ENCODE measurements at regions of chr6 and their contacts with region 1.

Region 1: GRCh38 chr6:125956506-125957390 is at the start of gene HINT3:
- DNase-seq: peak; percentile 83
- ATAC-seq: peak; percentile 85
- H3K4me3 ChIP-seq: peak within 1 kb of the TSS; percentile 82
- H3K27ac ChIP-seq: peak within 1 kb of the TSS; percentile 88
- H3K4me1 ChIP-seq: peaks cover 7% of the 10 kb centered on the region
- H3K27me3 ChIP-seq: no peaks in the 10 kb centered on the region
- CTCF ChIP-seq: peak; percentile 97 to 99 (median 98)
- EP300 ChIP-seq: 0 out of 4 replicates have a peak, but pooled peaks of 1 of the 2 experiments have one; percentile 27
- POLR2A ChIP-seq: peak; percentile 82
- RAD21 ChIP-seq: peak; percentile 76
- polyA plus RNA-seq, gene HINT3: 0.72 to 1.4 TPM

Region 2: GRCh38 chr6:125314019-125314581 is 642.6 kb before region 1 on chr6:
- CTCF ChIA-PET with region 1: interaction called, 10 read pairs
- POLR2A ChIA-PET with region 1: no interaction called
- RAD21 ChIA-PET with region 1: interaction called, 3 read pairs
- SMC1A ChIA-PET with region 1: interaction called, 4 read pairs
- in situ Hi-C with region 1: no loop called
- intact Hi-C with region 1: loop called (anchors 5 kb)
- DNase-seq: no peak
- ATAC-seq: peak; percentile 97
- H3K4me3 ChIP-seq: no peak overlapping the region
- H3K27ac ChIP-seq: no peak overlapping the region
- H3K4me1 ChIP-seq: no peaks in the 10 kb centered on the region
- H3K27me3 ChIP-seq: no peaks in the 10 kb centered on the region
- CTCF ChIP-seq: peak; percentile 76 to 95 (median 88)
- EP300 ChIP-seq: no peak
- POLR2A ChIP-seq: no peak
- RAD21 ChIP-seq: peak; percentile 96

Region 3: GRCh38 chr6:125732398-125732797 is 224.3 kb before region 1 on chr6:
- CTCF ChIA-PET with region 1: no interaction called
- POLR2A ChIA-PET with region 1: no interaction called
- RAD21 ChIA-PET with region 1: no interaction called
- SMC1A ChIA-PET with region 1: no interaction called
- in situ Hi-C with region 1: no loop called
- intact Hi-C with region 1: no loop called
- DNase-seq: no peak
- ATAC-seq: peak; percentile 64
- H3K4me3 ChIP-seq: no peak overlapping the region
- H3K27ac ChIP-seq: no peak overlapping the region
- H3K4me1 ChIP-seq: no peaks in the 10 kb centered on the region
- H3K27me3 ChIP-seq: peaks cover 3 to 4% of the 10 kb centered on the region in 2 experiments; a peak in 3 of 4 replicates
- CTCF ChIP-seq: no peak
- EP300 ChIP-seq: no peak
- POLR2A ChIP-seq: no peak
- RAD21 ChIP-seq: no peak

Region 4: GRCh38 chr6:125834348-125834747 is 122.4 kb before region 1 on chr6:
- CTCF ChIA-PET with region 1: interaction called, 13 read pairs
- POLR2A ChIA-PET with region 1: interaction called, 4 read pairs
- RAD21 ChIA-PET with region 1: interaction called, 6 read pairs
- SMC1A ChIA-PET with region 1: interaction called, 4 read pairs
- in situ Hi-C with region 1: no loop called
- intact Hi-C with region 1: no loop called
- DNase-seq: peak; percentile 36
- ATAC-seq: peak; percentile 82
- H3K4me3 ChIP-seq: no peak overlapping the region
- H3K27ac ChIP-seq: no peak overlapping the region
- H3K4me1 ChIP-seq: peaks cover 18% of the 10 kb centered on the region
- H3K27me3 ChIP-seq: no peaks in the 10 kb centered on the region
- CTCF ChIP-seq: no peak
- EP300 ChIP-seq: 0 out of 4 replicates have a peak, but pooled peaks of 1 of the 2 experiments have one; percentile 18
- POLR2A ChIP-seq: no peak
- RAD21 ChIP-seq: no peak

Region 5: DNA sequence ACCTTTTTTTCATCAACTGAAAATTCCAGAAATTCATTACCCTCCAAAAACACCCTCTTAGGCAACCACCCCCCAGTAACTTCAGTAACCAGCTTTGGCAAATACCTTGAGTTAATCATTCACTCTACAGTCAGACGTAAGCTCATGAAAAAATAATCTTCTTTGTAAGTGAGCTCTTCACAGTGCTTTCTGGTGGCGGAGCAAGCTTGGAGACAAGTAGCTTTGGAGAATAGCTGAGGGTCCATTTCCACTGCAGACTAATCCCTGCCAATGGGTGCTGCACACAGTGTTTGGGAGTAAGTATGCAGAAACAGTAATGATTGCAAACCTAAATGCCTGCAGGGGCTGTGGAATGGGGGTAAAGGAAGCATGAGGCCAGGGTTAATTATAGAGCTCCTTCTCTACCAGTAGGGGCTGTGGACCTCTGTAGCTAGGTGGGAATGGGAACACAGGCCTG is 57.0 kb before region 1 on chr6:
- CTCF ChIA-PET with region 1: interaction called, 46 read pairs
- POLR2A ChIA-PET with region 1: interaction called, 4 read pairs
- RAD21 ChIA-PET with region 1: interaction called, 12 read pairs
- SMC1A ChIA-PET with region 1: interaction called, 7 read pairs
- in situ Hi-C with region 1: no loop called
- intact Hi-C with region 1: no loop called
- DNase-seq: no peak
- ATAC-seq: peak; percentile 39; the same call in 2 of the 3 replicates
- H3K4me3 ChIP-seq: no peak overlapping the region
- H3K27ac ChIP-seq: no peak overlapping the region
- H3K4me1 ChIP-seq: no peaks in the 10 kb centered on the region
- H3K27me3 ChIP-seq: no peaks in the 10 kb centered on the region
- CTCF ChIP-seq: no peak
- EP300 ChIP-seq: no peak
- POLR2A ChIP-seq: no peak
- RAD21 ChIP-seq: no peak

Region 6: GRCh38 chr6:125918681-125919566 is 37.8 kb before region 1 on chr6:
- CTCF ChIA-PET with region 1: interaction called, 39 read pairs
- POLR2A ChIA-PET with region 1: interaction called, 11 read pairs
- RAD21 ChIA-PET with region 1: interaction called, 13 read pairs
- SMC1A ChIA-PET with region 1: interaction called, 35 read pairs
- in situ Hi-C with region 1: no loop called
- intact Hi-C with region 1: no loop called
- DNase-seq: peak; percentile 93
- ATAC-seq: peak; percentile 94
- H3K4me3 ChIP-seq: peak overlapping the region; percentile 62
- H3K27ac ChIP-seq: peak overlapping the region; percentile 96
- H3K4me1 ChIP-seq: peaks cover 8% of the 10 kb centered on the region
- H3K27me3 ChIP-seq: no peaks in the 10 kb centered on the region
- CTCF ChIP-seq: no peak
- EP300 ChIP-seq: 0 out of 4 replicates have a peak, but pooled peaks have one; percentile 11 to 25
- POLR2A ChIP-seq: peak; percentile 72
- RAD21 ChIP-seq: no peak

Region 7: DNA sequence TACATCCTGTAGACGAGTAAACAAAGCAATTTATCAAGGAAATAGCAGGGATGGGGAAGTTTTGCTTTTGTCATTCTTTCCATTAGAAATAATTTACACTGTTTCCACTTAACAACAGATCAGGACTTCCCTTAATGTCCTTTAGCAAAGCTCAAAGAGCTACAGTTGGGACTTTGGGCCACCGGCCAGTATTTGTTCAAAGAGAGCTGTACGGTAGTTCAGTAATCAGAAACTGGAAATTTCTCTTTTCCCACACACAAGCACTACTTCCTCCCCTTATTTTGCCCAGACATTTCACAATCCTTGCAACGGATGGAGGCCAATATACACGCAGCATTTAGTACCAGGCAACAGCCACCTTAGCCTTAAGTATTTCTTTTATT is 12.3 kb before region 1 on chr6:
- CTCF ChIA-PET with region 1: interaction called, 10 read pairs
- POLR2A ChIA-PET with region 1: no interaction called
- RAD21 ChIA-PET with region 1: interaction called, 7 read pairs
- SMC1A ChIA-PET with region 1: interaction called, 7 read pairs
- in situ Hi-C with region 1: no loop called
- intact Hi-C with region 1: no loop called
- DNase-seq: no peak
- ATAC-seq: no peak
- H3K4me3 ChIP-seq: no peak overlapping the region
- H3K27ac ChIP-seq: no peak overlapping the region
- H3K4me1 ChIP-seq: no peaks in the 10 kb centered on the region
- H3K27me3 ChIP-seq: no peaks in the 10 kb centered on the region
- CTCF ChIP-seq: no peak
- EP300 ChIP-seq: no peak
- POLR2A ChIP-seq: no peak
- RAD21 ChIP-seq: no peak